ENCODE measurements at regions of chr1 and their contacts with region 1.

Region 1: GRCh38 chr1:95233737-95234500 is at the start of gene RWDD3:
- DNase-seq: peak; percentile 94 to 97
- ATAC-seq: peak; percentile 95 to 99 (median 98)
- H3K4me3 ChIP-seq: peak within 1 kb of the TSS; percentile 81
- H3K27ac ChIP-seq: peak within 1 kb of the TSS; percentile 88
- H3K4me1 ChIP-seq: peaks cover 21% of the 10 kb centered on the region
- H3K27me3 ChIP-seq: no peaks in the 10 kb centered on the region
- CTCF ChIP-seq: peak; percentile 91
- total RNA-seq, gene RWDD3: 8.3 to 13.9 (median 12.5) TPM

Region 2: GRCh38 chr1:95072532-95073419 is 161.1 kb before region 1 on chr1 and contains the start of gene ALG14:
- intact Hi-C with region 1: loop called in 1 of 2 experiments (anchors 2 kb)
- DNase-seq: peak; percentile 94 to 97
- ATAC-seq: peak; percentile 99
- H3K4me3 ChIP-seq: peak within 1 kb of the TSS; percentile 78
- H3K27ac ChIP-seq: peak within 1 kb of the TSS; percentile 96
- H3K4me1 ChIP-seq: peaks cover 12% of the 10 kb centered on the region
- H3K27me3 ChIP-seq: peaks cover 0 to 13% (median 4%) of the 10 kb centered on the region in 3 donors
- CTCF ChIP-seq: no peak
- total RNA-seq, gene ALG14: 1.8 to 2.7 (median 2.4) TPM

Region 3: GRCh38 chr1:95084317-95085176 is 149.4 kb before region 1 on chr1:
- intact Hi-C with region 1: loop called (anchors 5 kb)
- DNase-seq: no peak
- ATAC-seq: peak; percentile 52 to 74 (median 72)
- H3K4me3 ChIP-seq: no peak overlapping the region
- H3K27ac ChIP-seq: peak overlapping the region; percentile 7
- H3K4me1 ChIP-seq: peaks cover 13% of the 10 kb centered on the region
- H3K27me3 ChIP-seq: no peaks in the 10 kb centered on the region
- CTCF ChIP-seq: peak; percentile 66

Region 4: DNA sequence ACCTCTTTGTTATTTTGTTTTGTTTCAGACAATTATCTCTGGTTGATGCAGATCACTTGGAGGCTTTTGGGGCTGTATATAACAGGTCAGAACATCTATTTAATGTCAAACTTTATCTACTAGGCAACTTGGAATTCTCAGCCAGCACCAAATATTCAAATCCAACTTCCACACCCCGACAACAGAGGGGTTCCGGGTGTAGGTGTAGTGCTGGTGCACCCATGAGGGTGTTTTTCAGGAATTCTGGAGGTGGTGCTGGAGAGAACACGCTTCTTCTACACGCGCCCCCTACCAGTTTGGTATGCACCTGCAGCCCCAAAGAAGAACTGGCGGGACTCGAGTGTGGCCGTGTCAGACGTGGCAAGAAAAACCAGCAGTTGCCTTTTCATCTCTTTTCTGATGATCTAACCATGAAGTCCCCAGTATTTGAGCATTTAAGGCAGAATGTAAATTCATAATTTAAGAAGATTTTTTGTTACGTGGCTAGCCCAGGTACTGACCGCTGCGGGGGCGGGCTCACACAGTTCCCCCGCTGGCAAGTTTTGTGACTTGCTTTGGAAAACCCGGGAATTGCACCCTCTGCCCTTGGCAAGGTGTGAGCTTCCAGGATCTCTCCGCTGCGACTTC is 117.2 kb before region 1 on chr1:
- intact Hi-C with region 1: loop called in 1 of 2 experiments (anchors 5 kb)
- DNase-seq: peak; percentile 29 to 61
- ATAC-seq: peak; percentile 58 to 75 (median 68)
- H3K4me3 ChIP-seq: peak overlapping the region; percentile 78
- H3K27ac ChIP-seq: peak overlapping the region; percentile 79
- H3K4me1 ChIP-seq: peaks cover 13% of the 10 kb centered on the region
- H3K27me3 ChIP-seq: no peaks in the 10 kb centered on the region
- CTCF ChIP-seq: peak; percentile 46

Region 5: GRCh38 chr1:95197616-95198252 is 36.2 kb before region 1 on chr1:
- intact Hi-C with region 1: loop called in 1 of 2 experiments (anchors 5 kb)
- DNase-seq: no peak
- ATAC-seq: peak; percentile 86 to 93 (median 92)
- H3K4me3 ChIP-seq: peak overlapping the region; percentile 0
- H3K27ac ChIP-seq: peak overlapping the region; percentile 62
- H3K4me1 ChIP-seq: peaks cover 41% of the 10 kb centered on the region
- H3K27me3 ChIP-seq: no peaks in the 10 kb centered on the region
- CTCF ChIP-seq: no peak